ENCODE measurements at regions of chr15 and their contacts with region 1.

Region 1: GRCh38 chr15:70974004-70974832 is 81.6 kb downstream of the LRRC49 start:
- DNase-seq: peak; percentile 18
- ATAC-seq: no peak
- H3K4me3 ChIP-seq: no peak overlapping the region
- H3K27ac ChIP-seq: no peak overlapping the region
- H3K4me1 ChIP-seq: no peaks in the 10 kb centered on the region
- H3K27me3 ChIP-seq: no peaks in the 10 kb centered on the region
- CTCF ChIP-seq: peak; percentile 35; the same call in 1 of the 2 replicates
- EP300 ChIP-seq: no peak
- POLR2A ChIP-seq: no peak
- RAD21 ChIP-seq: no peak

Region 2: GRCh38 chr15:70783599-70784022 is 190.6 kb before region 1 on chr15:
- CTCF ChIA-PET with region 1: no interaction called
- POLR2A ChIA-PET with region 1: no interaction called
- in situ Hi-C with region 1: no loop called
- intact Hi-C with region 1: no loop called
- DNase-seq: peak; percentile 51
- ATAC-seq: peak; percentile 87
- H3K4me3 ChIP-seq: no peak overlapping the region
- H3K27ac ChIP-seq: no peak overlapping the region
- H3K4me1 ChIP-seq: peaks cover 39% of the 10 kb centered on the region
- H3K27me3 ChIP-seq: no peaks in the 10 kb centered on the region
- CTCF ChIP-seq: no peak
- EP300 ChIP-seq: 0 out of 4 replicates have a peak, but pooled peaks of 1 of the 2 experiments have one; percentile 7
- POLR2A ChIP-seq: no peak
- RAD21 ChIP-seq: no peak

Region 3: DNA sequence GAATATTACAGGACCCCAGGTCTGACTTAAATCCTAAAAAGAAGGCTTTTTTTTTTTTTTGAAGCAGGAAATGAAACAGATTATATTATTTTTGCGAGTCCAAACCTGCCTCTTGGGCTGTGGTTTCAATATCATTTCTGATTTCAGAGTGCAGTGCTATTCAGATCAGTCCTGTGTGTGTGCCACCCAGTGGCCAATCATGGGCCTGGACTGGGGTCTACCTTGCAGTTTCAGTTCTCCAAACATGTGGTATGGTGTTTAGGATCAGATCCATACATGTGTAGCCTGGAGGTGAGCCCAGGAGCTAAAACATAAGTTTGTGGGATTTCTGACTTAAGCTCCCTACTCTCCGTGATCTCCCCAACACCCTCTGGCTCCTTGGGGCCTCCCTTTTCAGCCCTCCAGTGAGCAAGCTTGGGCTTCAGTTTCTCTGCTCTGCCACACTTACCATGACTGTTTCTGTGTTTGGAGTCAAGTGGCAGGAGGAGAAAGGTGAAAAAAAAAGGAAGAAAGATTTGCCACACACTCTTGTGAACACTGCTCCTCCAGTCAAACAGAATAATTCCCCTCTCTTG is 129.0 kb after region 1 on chr15:
- CTCF ChIA-PET with region 1: interaction called, 3 read pairs
- POLR2A ChIA-PET with region 1: no interaction called
- in situ Hi-C with region 1: no loop called
- intact Hi-C with region 1: loop called (anchors 1 kb)
- DNase-seq: peak; percentile 15
- ATAC-seq: peak; percentile 90
- H3K4me3 ChIP-seq: no peak overlapping the region
- H3K27ac ChIP-seq: no peak overlapping the region
- H3K4me1 ChIP-seq: no peaks in the 10 kb centered on the region
- H3K27me3 ChIP-seq: no peaks in the 10 kb centered on the region
- CTCF ChIP-seq: peak; percentile 52
- EP300 ChIP-seq: no peak
- POLR2A ChIP-seq: no peak
- RAD21 ChIP-seq: no peak

Region 4: DNA sequence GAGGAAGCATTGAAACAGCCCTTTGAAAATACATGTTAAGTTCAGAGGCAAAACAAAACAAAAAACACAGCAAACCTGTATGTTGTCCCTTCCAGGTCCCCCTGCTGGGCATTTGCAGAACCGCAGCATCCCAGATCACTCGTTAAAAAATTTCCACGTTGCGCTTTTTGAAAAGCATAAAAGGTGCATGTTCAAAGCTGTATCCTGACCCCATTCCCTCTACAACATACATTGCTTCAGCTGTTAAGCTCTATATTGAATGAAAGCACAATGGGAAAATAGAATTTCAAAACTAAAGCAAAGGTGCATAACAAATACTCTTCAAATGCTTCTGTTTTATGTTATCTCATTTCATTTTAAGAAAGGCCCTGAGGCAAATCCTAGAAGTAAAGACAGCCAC is 469.3 kb after region 1 on chr15:
- CTCF ChIA-PET with region 1: interaction called, 7 read pairs
- POLR2A ChIA-PET with region 1: no interaction called
- in situ Hi-C with region 1: loop called (anchors 5 kb)
- intact Hi-C with region 1: no loop called
- DNase-seq: peak; percentile 23
- ATAC-seq: peak; percentile 31; the same call in 1 of the 3 replicates
- H3K4me3 ChIP-seq: no peak overlapping the region
- H3K27ac ChIP-seq: no peak overlapping the region
- H3K4me1 ChIP-seq: peaks cover 49% of the 10 kb centered on the region
- H3K27me3 ChIP-seq: no peaks in the 10 kb centered on the region
- CTCF ChIP-seq: peak; percentile 59
- EP300 ChIP-seq: no peak
- POLR2A ChIP-seq: no peak
- RAD21 ChIP-seq: no peak

Region 5: GRCh38 chr15:71634820-71635560 is 660.8 kb after region 1 on chr15:
- CTCF ChIA-PET with region 1: no interaction called
- POLR2A ChIA-PET with region 1: no interaction called
- in situ Hi-C with region 1: no loop called
- intact Hi-C with region 1: no loop called
- DNase-seq: no peak
- ATAC-seq: no peak
- H3K4me3 ChIP-seq: no peak overlapping the region
- H3K27ac ChIP-seq: no peak overlapping the region
- H3K4me1 ChIP-seq: no peaks in the 10 kb centered on the region
- H3K27me3 ChIP-seq: peaks cover 0 to 11% of the 10 kb centered on the region in 2 experiments; a peak in 1 of 5 replicates
- CTCF ChIP-seq: no peak
- EP300 ChIP-seq: no peak
- POLR2A ChIP-seq: no peak
- RAD21 ChIP-seq: no peak